Body of pancreas (tissue), 4 donors: ENCODE measurements at regions of chr1 and their contacts with region 1.

Region 1: GRCh38 chr1:66452162-66452561 is 81.8 kb upstream of the SGIP1 start:
- DNase-seq: no peak
- ATAC-seq: no peak
- H3K4me3 ChIP-seq: no peak overlapping the region
- H3K27ac ChIP-seq: no peak overlapping the region
- H3K4me1 ChIP-seq: no peaks in the 10 kb centered on the region
- H3K27me3 ChIP-seq: no peaks in the 10 kb centered on the region
- CTCF ChIP-seq: no peak
- POLR2A ChIP-seq: no peak

Region 2: DNA sequence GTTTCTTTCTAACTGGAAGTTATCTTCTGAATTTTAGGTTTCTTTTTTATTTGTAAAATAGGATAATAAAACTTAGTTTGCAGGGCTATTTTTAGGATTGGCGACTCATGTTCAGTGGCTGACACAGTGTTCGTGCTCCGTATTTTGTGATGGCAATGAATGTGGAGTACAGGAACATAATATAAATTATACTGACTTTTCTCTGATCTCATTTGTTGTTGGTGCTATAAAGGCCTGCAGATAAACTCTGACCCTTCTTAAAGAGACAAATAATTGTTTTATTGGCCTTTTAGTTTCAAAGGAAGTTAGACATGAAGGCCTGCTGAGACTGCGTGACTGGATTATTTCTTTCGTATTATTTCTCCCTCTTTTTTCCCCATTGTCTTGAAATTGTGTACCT is 319.8 kb before region 1 on chr1:
- intact Hi-C with region 1: no loop called
- DNase-seq: no peak
- ATAC-seq: no peak
- H3K4me3 ChIP-seq: no peak overlapping the region
- H3K27ac ChIP-seq: no peak overlapping the region
- H3K4me1 ChIP-seq: no peaks in the 10 kb centered on the region
- H3K27me3 ChIP-seq: no peaks in the 10 kb centered on the region
- CTCF ChIP-seq: no peak
- POLR2A ChIP-seq: no peak

Region 3: GRCh38 chr1:66253330-66253921 is 198.7 kb before region 1 on chr1:
- intact Hi-C with region 1: loop called (anchors 5 kb)
- DNase-seq: peak in 1 of 4 donors; percentile 25
- ATAC-seq: peak; percentile 72
- H3K4me3 ChIP-seq: no peak overlapping the region
- H3K27ac ChIP-seq: no peak overlapping the region
- H3K4me1 ChIP-seq: no peaks in the 10 kb centered on the region
- H3K27me3 ChIP-seq: no peaks in the 10 kb centered on the region
- CTCF ChIP-seq: peak in 6 of 7 experiments; percentile 41 to 83 (median 77)
- POLR2A ChIP-seq: no peak

Region 4: DNA sequence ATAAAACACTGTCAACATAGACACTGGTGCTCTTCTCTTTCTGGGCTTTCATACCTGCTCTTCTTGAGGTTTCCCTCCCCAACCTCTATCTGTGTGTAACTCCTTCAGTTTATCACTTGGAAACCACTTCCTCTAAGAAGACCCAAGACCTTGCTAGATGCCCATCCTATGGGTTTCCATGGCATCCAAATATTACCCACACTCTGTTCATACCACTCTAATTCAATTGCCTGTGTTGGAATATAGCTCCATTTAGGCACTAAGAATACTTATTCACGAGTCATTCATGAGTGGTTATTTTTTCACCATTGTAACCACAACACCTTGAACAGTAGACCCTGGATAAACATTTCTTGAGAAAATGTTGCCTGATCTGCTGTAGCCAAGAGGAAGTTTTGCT is 149.3 kb before region 1 on chr1:
- intact Hi-C with region 1: no loop called
- DNase-seq: no peak
- ATAC-seq: no peak
- H3K4me3 ChIP-seq: no peak overlapping the region
- H3K27ac ChIP-seq: no peak overlapping the region
- H3K4me1 ChIP-seq: no peaks in the 10 kb centered on the region
- H3K27me3 ChIP-seq: no peaks in the 10 kb centered on the region
- CTCF ChIP-seq: no peak
- POLR2A ChIP-seq: no peak